ENCODE measurements at regions of chr12 and their contacts with region 1.

Region 1: DNA sequence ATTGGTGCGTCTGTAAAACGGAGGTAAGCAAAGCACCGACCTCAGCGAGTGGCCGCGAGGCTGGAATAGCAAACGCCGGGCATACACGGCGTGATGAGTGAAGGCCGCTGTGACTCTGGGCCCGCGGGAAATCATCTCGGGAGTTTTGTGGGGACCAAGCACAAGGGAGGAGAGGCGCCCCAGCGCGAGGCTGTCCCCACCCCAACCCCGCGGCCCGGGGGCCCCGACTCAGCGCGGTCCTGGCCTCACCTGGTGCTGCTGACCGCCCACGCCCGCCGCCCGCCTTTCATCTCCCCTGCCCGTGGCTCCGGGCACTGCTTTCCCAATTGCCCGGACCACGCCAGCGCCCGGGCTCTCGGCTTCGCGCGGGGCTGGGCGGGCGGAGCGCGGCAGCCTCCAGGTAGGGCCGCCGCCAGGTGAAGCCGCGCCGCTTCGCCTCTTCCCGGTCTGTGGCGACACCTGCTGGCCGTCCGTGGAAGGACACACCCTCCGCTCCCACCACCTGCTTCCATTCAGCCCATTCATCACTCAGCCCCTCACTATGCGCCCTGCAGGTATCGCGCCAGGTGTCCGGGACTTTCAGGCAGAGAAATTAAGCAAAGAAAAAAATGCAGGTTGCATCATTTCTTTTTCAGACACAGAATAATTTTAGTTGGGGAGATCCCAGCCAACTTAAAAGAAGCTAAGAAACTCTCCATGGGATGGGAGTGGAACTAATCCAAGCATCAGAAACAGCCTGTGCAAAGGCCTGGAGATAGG is 360.4 kb downstream of the MED13L start:
- DNase-seq: no peak
- H3K4me3 ChIP-seq: peak overlapping the region; percentile 39
- H3K27me3 ChIP-seq: 0 out of 2 replicates have a peak, but pooled peaks cover 2% of the 10 kb centered on the region
- CTCF ChIP-seq: peak; percentile 77

Region 2: DNA sequence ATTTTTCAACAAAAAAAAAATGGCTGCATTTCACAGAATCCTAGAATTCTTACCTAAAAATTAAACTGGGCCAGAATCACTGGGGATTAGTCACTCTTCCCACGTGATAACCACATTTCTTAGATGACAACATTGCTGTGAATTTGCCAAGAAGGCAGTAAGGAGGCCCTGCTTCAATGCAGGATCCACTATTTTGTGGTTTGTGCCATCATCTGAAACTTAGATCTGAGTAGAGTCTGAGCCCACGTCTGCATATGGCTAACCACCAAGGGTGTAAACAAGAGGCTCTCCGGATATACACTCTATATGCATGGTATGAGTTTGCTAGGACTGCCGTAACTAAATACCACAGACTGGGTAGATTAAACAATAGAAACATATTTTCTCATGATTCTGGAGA is 1486.8 kb before region 1 on chr12:
- CTCF ChIA-PET with region 1: no interaction called
- POLR2A ChIA-PET with region 1: interaction called, 13 read pairs
- DNase-seq: peak; percentile 94
- H3K4me3 ChIP-seq: no peak overlapping the region
- H3K27me3 ChIP-seq: no peaks in the 10 kb centered on the region
- CTCF ChIP-seq: no peak

Region 3: DNA sequence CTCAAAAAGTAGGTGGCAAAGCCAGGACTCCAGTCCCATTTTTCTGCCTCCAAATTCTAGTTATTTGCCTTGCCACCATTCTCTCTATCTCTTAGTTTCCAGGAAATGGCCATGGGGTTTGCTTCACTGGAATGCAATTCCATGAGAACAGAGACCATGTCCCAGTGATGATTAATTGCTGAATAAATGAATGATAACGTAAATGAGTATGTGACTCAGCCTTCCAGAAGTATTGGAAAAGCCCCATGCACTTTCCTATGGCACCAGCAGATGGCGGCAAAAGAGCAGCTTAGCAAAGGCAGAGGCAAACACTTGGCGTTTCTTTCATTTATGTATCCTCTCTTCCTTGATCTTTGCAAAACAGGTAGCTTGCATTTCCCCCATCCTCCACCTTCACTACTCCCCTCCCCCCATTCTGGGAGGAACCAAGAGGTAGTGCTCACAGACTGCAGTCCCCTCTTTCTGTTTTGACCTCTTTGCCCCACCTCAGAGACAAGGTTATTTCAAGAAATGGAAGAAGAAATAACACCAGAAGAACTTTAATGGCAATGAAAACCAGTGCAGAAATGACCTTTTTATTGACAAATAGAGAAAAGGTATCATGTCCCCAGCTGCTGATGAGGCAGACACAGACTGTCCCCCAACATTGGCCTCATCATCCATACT is 1254.4 kb before region 1 on chr12:
- CTCF ChIA-PET with region 1: interaction called, 18 read pairs
- POLR2A ChIA-PET with region 1: no interaction called
- DNase-seq: peak; percentile 91
- H3K4me3 ChIP-seq: no peak overlapping the region
- H3K27me3 ChIP-seq: no peaks in the 10 kb centered on the region
- CTCF ChIP-seq: peak; percentile 92

Region 4: GRCh38 chr12:115930336-115930735 is 13.2 kb after region 1 on chr12:
- CTCF ChIA-PET with region 1: no interaction called
- POLR2A ChIA-PET with region 1: no interaction called
- DNase-seq: no peak
- H3K4me3 ChIP-seq: no peak overlapping the region
- H3K27me3 ChIP-seq: no peaks in the 10 kb centered on the region
- CTCF ChIP-seq: no peak

Region 5: GRCh38 chr12:116053479-116054200 is 136.6 kb after region 1 on chr12:
- CTCF ChIA-PET with region 1: no interaction called
- POLR2A ChIA-PET with region 1: no interaction called
- DNase-seq: peak; percentile 13
- H3K4me3 ChIP-seq: no peak overlapping the region
- H3K27me3 ChIP-seq: no peaks in the 10 kb centered on the region
- CTCF ChIP-seq: no peak